HepG2 (cell line): ENCODE measurements at regions of chr1 and their contacts with region 1.

Region 1: GRCh38 chr1:60078182-60078581 is 4.6 kb upstream of the C1orf87 start:
- DNase-seq: no peak
- ATAC-seq: no peak
- H3K4me3 ChIP-seq: no peak overlapping the region
- H3K27ac ChIP-seq: no peak overlapping the region
- H3K4me1 ChIP-seq: no peaks in the 10 kb centered on the region
- H3K27me3 ChIP-seq: peaks cover 1 to 8% of the 10 kb centered on the region in 2 experiments; a peak in 2 of 5 replicates
- CTCF ChIP-seq: no peak
- EP300 ChIP-seq: no peak
- POLR2A ChIP-seq: no peak
- RAD21 ChIP-seq: no peak

Region 2: GRCh38 chr1:58619286-58620054 is 1458.7 kb before region 1 on chr1:
- CTCF ChIA-PET with region 1: no interaction called
- POLR2A ChIA-PET with region 1: no interaction called
- in situ Hi-C with region 1: no loop called
- intact Hi-C with region 1: loop called (anchors 5 kb)
- DNase-seq: no peak
- ATAC-seq: peak; percentile 21; the same call in 1 of the 3 replicates
- H3K4me3 ChIP-seq: no peak overlapping the region
- H3K27ac ChIP-seq: no peak overlapping the region
- H3K4me1 ChIP-seq: peaks cover 11% of the 10 kb centered on the region
- H3K27me3 ChIP-seq: 0 out of 5 replicates have a peak, but pooled peaks cover 0 to 17% of the 10 kb centered on the region in 2 experiments
- CTCF ChIP-seq: no peak
- EP300 ChIP-seq: no peak
- POLR2A ChIP-seq: no peak
- RAD21 ChIP-seq: no peak